Breast epithelium (tissue), 4 donors: ENCODE measurements at regions of chr19 and their contacts with region 1.

Region 1: DNA sequence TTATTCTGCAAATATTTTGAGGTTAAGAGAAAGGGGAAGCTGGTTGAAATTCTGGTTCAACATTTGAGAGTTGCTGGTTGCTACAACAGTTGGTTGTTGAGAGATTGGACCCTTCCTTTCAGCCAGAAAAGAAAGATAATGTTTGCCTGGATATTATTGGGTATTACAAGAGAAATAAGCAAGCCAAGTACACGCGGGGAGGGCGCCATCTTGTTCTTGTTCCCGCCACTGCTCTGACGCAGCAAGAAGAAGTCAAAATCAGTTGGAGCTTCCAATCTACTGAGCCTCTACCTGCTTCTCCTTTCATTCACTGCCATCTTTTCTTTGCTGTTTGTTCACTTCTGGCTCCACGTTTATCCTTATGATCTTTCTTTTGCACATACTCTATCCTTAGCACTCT is 18.4 kb downstream of the BSPH1 start:
- DNase-seq: no peak
- H3K4me3 ChIP-seq: no peak overlapping the region
- H3K27ac ChIP-seq: no peak overlapping the region
- H3K4me1 ChIP-seq: no peaks in the 10 kb centered on the region
- H3K27me3 ChIP-seq: peaks cover 0 to 4% of the 10 kb centered on the region in 2 donors
- CTCF ChIP-seq: no peak
- POLR2A ChIP-seq: no peak

Region 2: DNA sequence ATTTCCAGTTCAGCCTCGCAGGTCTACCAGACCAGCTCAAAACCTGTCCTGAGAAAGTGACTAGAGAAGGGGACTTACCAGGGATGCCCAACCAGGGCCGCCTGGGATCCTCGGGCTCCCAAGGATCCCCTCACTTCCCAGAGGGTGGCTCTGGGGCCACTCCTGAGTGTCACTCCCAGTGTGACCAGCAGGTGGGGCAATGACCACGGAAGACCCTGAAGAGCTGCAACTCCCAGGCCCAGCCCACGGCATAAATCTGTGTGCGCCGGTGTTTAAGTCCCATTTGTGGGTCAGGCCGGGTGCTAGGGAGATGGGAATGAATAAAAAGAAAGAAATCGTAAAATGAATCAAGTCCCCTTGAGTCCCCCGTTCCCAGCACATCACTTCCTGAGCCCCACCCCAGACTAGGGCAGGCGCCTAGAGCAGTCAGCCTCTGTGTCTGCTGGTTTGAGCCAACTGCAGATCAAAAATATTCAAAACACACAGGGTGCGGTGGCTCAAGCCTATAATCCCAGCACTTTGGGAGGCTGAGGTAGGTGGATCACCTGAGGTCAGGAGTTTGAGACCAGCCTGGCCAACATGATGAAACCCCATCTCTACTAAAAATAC is 1359.3 kb before region 1 on chr19:
- intact Hi-C with region 1: no loop called
- DNase-seq: peak; percentile 67 to 78
- H3K4me3 ChIP-seq: no peak overlapping the region
- H3K27ac ChIP-seq: no peak overlapping the region
- H3K4me1 ChIP-seq: peaks cover 4 to 10% of the 10 kb centered on the region in 2 donors
- H3K27me3 ChIP-seq: no peaks in the 10 kb centered on the region
- CTCF ChIP-seq: peak; percentile 88 to 91 (median 90)
- POLR2A ChIP-seq: no peak

Region 3: GRCh38 chr19:48152551-48152950 is 179.0 kb after region 1 on chr19:
- intact Hi-C with region 1: loop called (anchors 10 kb)
- DNase-seq: peak; percentile 49 to 61
- H3K4me3 ChIP-seq: no peak overlapping the region
- H3K27ac ChIP-seq: no peak overlapping the region
- H3K4me1 ChIP-seq: no peaks in the 10 kb centered on the region
- H3K27me3 ChIP-seq: no peaks in the 10 kb centered on the region
- CTCF ChIP-seq: peak; percentile 77 to 86 (median 78)
- POLR2A ChIP-seq: no peak